ENCODE measurements at regions of chrX and their contacts with region 1.

Region 1: DNA sequence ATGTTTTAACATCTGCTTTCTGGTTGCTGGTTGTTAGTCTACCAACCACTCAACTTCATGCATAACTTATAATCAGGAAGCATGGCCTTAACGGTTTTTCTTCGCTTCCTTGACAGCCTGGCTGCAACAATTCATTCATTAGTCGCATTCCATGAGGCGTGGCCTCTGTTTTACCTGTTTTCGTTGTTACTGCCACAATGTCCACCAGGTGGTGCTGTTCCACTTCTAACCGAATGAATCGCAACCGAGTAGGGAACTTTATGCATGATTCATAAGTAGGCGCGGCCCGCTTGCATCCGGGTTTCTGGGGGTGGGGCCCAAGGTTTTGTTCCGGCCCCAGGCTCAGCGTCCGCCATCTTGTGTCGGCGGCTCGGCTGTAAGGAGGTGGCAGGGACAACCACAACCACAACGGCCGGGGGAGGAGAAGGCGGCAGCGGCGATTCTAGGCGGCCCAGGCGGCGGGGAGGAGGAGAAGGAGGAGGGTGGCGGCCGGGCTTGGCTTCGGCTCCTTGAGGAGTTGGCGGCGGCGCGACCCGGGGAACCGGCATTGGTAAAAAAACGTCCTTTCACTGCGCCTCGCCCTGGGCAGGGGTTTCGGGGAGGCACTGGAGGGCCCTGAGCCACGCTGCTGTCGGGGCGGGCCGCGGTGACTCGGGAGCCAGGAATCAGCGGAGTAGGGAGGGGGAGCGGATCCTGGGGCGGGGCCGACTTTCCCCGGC is at the start of gene UBA1:
- DNase-seq: peak; percentile 83 to 96 (median 88)
- ATAC-seq: peak; percentile 92
- H3K4me3 ChIP-seq: peak within 1 kb of the TSS; percentile 94
- H3K27ac ChIP-seq: peak within 1 kb of the TSS; percentile 94
- H3K4me1 ChIP-seq: peaks cover 6 to 23% of the 10 kb centered on the region in 2 experiments; a peak in 4 of 5 replicates
- H3K27me3 ChIP-seq: no peaks in the 10 kb centered on the region
- CTCF ChIP-seq: peak; percentile 74 to 89 (median 80)
- EP300 ChIP-seq: 0 out of 2 replicates have a peak, but pooled peaks have one; percentile 13
- POLR2A ChIP-seq: peak; percentile 94
- RAD21 ChIP-seq: peak; percentile 90 to 91
- polyA plus RNA-seq, gene UBA1: 32.0 to 40.1 TPM

Region 2: GRCh38 chrX:47311932-47312774 is 118.5 kb after region 1 on chrX:
- CTCF ChIA-PET with region 1: interaction called, 8 read pairs
- POLR2A ChIA-PET with region 1: interaction called, 3 read pairs
- in situ Hi-C with region 1: no loop called
- intact Hi-C with region 1: loop called (anchors 2 kb)
- DNase-seq: peak; percentile 43 to 61 (median 47)
- ATAC-seq: peak; percentile 92
- H3K4me3 ChIP-seq: no peak overlapping the region
- H3K27ac ChIP-seq: no peak overlapping the region
- H3K4me1 ChIP-seq: no peaks in the 10 kb centered on the region; a peak in 1 of 5 replicates
- H3K27me3 ChIP-seq: no peaks in the 10 kb centered on the region; a peak in 1 of 5 replicates
- CTCF ChIP-seq: peak; percentile 59 to 63 (median 61)
- EP300 ChIP-seq: no peak
- POLR2A ChIP-seq: no peak
- RAD21 ChIP-seq: peak in 1 of 2 experiments; percentile 35; a peak in 2 of 4 replicates

Region 3: DNA sequence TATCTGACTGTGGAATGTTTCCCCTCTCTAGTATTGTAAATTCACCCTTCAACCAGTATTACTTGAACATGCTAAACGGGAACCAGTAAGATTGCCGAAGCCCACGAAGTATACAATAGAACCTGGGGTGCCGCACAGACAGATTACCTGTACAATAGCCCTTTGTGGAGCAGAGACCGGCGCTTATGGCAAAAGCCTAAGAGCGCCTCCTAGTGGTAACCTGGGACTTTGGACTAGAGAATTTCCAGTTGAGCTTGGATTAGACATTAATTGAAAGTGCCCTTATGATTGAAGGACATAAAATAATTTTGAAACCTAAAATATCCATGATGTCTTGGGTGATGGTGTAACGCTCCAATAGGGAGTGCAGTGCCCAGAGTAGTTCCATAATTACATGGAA is 190.9 kb after region 1 on chrX:
- CTCF ChIA-PET with region 1: interaction called, 4 read pairs
- POLR2A ChIA-PET with region 1: no interaction called
- in situ Hi-C with region 1: loop called (anchors 10 kb)
- intact Hi-C with region 1: loop called (anchors 1 kb)
- DNase-seq: peak; percentile 33 to 75 (median 38)
- ATAC-seq: peak; percentile 89
- H3K4me3 ChIP-seq: no peak overlapping the region
- H3K27ac ChIP-seq: no peak overlapping the region
- H3K4me1 ChIP-seq: no peaks in the 10 kb centered on the region; a peak in 1 of 5 replicates
- H3K27me3 ChIP-seq: peaks cover 0 to 2% of the 10 kb centered on the region in 2 experiments; a peak in 2 of 5 replicates
- CTCF ChIP-seq: peak; percentile 65 to 80 (median 78)
- EP300 ChIP-seq: no peak
- POLR2A ChIP-seq: no peak
- RAD21 ChIP-seq: peak; percentile 57 to 80

Region 4: GRCh38 chrX:47523297-47523696 is 329.7 kb after region 1 on chrX:
- CTCF ChIA-PET with region 1: interaction called, 14 read pairs
- POLR2A ChIA-PET with region 1: no interaction called
- in situ Hi-C with region 1: loop called (anchors 10 kb)
- intact Hi-C with region 1: loop called (anchors 1 kb)
- DNase-seq: peak; percentile 81 to 87 (median 83)
- ATAC-seq: peak; percentile 100
- H3K4me3 ChIP-seq: peak overlapping the region; percentile 41
- H3K27ac ChIP-seq: no peak overlapping the region
- H3K4me1 ChIP-seq: peaks cover 0 to 11% of the 10 kb centered on the region in 2 experiments; a peak in 2 of 5 replicates
- H3K27me3 ChIP-seq: peaks cover 0 to 4% of the 10 kb centered on the region in 2 experiments; a peak in 1 of 5 replicates
- CTCF ChIP-seq: peak; percentile 69 to 90 (median 86)
- EP300 ChIP-seq: no peak
- POLR2A ChIP-seq: no peak
- RAD21 ChIP-seq: peak; percentile 86 to 87

Region 5: GRCh38 chrX:47751670-47752069 is 558.0 kb after region 1 on chrX:
- CTCF ChIA-PET with region 1: no interaction called
- POLR2A ChIA-PET with region 1: no interaction called
- in situ Hi-C with region 1: no loop called
- intact Hi-C with region 1: loop called (anchors 10 kb)
- DNase-seq: peak; percentile 27 to 65 (median 36)
- ATAC-seq: peak; percentile 95
- H3K4me3 ChIP-seq: no peak overlapping the region
- H3K27ac ChIP-seq: no peak overlapping the region
- H3K4me1 ChIP-seq: peaks cover 0 to 10% of the 10 kb centered on the region in 2 experiments; a peak in 2 of 5 replicates
- H3K27me3 ChIP-seq: no peaks in the 10 kb centered on the region
- CTCF ChIP-seq: peak; percentile 66 to 72 (median 72)
- EP300 ChIP-seq: no peak
- POLR2A ChIP-seq: no peak
- RAD21 ChIP-seq: peak; percentile 43 to 78

Measured in K562 (cell line).